HAP-1 (cell line): ENCODE measurements at regions of chr15 and their contacts with region 1.

Region 1: DNA sequence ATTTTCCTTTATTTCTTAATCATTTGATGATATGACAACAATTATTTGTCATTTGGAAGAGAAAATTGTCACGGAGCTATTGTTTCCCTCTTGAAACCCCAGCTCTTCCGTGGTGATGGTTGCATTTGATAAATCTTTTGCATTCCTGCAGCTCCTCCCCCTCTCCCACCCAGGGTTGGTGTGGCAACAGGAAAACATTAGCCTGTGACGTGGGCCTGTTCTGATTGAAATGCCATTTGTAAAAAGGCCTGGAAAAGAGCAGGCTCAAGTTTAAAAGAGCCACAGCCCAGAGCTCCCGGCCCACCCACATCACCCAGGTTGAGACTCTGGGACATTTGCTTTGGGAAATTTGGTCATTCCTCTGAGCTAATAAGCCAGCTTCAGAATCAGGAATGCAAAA is 282.5 kb downstream of the RPLP1 start:
- DNase-seq: peak in 1 of 2 experiments; percentile 53
- H3K4me3 ChIP-seq: no peak overlapping the region
- H3K4me1 ChIP-seq: no peaks in the 10 kb centered on the region
- H3K27me3 ChIP-seq: peaks cover 4% of the 10 kb centered on the region; the same call in 1 of the 2 replicates

Region 2: GRCh38 chr15:69502470-69503045 is 232.6 kb before region 1 on chr15:
- in situ Hi-C with region 1: loop called (anchors 10 kb)
- DNase-seq: peak in 1 of 2 experiments; percentile 17
- H3K4me3 ChIP-seq: no peak overlapping the region
- H3K4me1 ChIP-seq: no peaks in the 10 kb centered on the region
- H3K27me3 ChIP-seq: no peaks in the 10 kb centered on the region

Region 3: DNA sequence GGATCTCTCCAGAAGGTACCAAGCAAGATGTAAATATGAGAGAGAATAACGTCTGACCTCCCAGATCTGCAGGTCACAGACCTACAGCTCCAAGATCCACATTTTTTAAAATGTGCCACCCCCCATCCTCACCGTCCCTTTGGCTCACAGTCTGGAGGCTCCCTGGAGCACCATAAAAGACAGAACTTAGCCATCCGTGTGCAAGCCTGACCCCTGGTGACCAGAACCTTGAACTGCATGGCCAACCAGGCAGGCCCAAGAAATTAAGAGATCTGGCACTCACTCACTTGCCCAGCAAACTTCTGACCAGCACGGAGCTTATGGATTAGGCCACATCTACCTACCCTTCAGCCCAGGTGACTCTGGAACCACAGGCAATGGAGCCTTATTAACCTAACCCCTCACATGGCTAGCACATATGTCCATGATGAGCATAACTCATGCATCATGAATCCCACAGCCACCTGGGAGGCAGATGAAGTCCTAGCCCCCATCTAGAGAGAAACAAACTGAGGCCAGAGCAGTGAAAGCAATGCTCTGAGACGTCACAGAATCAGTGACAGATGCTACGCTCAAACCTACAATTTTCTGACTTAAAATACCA is 753.0 kb after region 1 on chr15:
- in situ Hi-C with region 1: loop called (anchors 10 kb)
- DNase-seq: peak; percentile 63 to 89
- H3K4me3 ChIP-seq: no peak overlapping the region
- H3K4me1 ChIP-seq: no peaks in the 10 kb centered on the region
- H3K27me3 ChIP-seq: peaks cover 10% of the 10 kb centered on the region